AG04450 (cell line): ENCODE measurements at regions of chr11 and their contacts with region 1.

Region 1: DNA sequence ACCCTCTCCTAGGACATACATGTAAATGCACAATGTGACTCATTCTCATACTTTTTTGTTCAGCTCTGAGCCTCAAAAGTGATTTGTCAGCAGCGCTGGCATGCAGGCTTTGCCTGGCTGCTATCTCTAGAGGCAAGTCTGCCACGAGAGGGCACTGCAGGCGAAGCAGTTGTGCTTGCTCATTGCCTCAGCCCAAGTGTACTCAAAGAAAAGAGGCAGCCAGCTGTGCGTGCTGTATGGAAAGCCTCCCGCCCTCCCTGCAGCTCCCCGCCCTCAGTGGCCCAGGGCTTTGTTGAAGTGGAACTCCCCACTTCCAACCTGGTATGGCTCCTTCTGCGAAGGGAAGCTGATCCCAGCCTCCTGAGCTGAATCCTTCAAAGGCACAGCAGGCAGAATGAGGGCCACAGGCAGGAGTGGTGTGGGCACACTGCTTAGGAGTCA is 16.3 kb downstream of the SDHAF2 start:
- DNase-seq: peak; percentile 95
- H3K4me3 ChIP-seq: no peak overlapping the region
- H3K27ac ChIP-seq: peak overlapping the region; percentile 71
- H3K27me3 ChIP-seq: no peaks in the 10 kb centered on the region
- CTCF ChIP-seq: peak; percentile 95

Region 2: GRCh38 chr11:61460474-61460881 is 14.2 kb after region 1 on chr11:
- CTCF ChIA-PET with region 1: interaction called, 77 read pairs
- POLR2A ChIA-PET with region 1: no interaction called
- DNase-seq: no peak
- H3K4me3 ChIP-seq: no peak overlapping the region
- H3K27ac ChIP-seq: no peak overlapping the region
- H3K27me3 ChIP-seq: no peaks in the 10 kb centered on the region
- CTCF ChIP-seq: no peak

Region 3: DNA sequence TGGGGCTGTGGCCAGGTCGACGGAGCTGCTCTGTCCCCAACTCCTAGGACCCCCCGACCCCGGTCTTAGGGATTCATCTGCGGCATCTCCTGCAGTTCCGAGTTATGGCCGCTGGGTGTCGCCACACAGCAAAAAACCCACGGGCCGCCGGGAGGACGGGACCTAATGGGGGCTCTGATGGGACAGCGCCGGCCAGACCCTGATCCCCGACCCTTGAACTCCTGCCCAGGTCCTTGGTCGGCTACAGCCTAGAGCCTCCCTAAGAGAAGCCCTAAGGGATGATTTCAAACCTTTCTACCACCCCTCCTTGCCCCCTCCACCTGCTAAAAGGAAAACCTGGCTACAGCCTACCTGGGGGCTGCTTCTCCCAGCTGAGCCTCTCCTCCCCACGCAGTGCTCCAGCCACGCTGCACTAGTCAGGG is 31.5 kb after region 1 on chr11:
- CTCF ChIA-PET with region 1: interaction called, 13 read pairs
- POLR2A ChIA-PET with region 1: no interaction called
- DNase-seq: no peak
- H3K4me3 ChIP-seq: no peak overlapping the region
- H3K27ac ChIP-seq: no peak overlapping the region
- H3K27me3 ChIP-seq: peaks cover 15% of the 10 kb centered on the region
- CTCF ChIP-seq: peak; percentile 87

Region 4: DNA sequence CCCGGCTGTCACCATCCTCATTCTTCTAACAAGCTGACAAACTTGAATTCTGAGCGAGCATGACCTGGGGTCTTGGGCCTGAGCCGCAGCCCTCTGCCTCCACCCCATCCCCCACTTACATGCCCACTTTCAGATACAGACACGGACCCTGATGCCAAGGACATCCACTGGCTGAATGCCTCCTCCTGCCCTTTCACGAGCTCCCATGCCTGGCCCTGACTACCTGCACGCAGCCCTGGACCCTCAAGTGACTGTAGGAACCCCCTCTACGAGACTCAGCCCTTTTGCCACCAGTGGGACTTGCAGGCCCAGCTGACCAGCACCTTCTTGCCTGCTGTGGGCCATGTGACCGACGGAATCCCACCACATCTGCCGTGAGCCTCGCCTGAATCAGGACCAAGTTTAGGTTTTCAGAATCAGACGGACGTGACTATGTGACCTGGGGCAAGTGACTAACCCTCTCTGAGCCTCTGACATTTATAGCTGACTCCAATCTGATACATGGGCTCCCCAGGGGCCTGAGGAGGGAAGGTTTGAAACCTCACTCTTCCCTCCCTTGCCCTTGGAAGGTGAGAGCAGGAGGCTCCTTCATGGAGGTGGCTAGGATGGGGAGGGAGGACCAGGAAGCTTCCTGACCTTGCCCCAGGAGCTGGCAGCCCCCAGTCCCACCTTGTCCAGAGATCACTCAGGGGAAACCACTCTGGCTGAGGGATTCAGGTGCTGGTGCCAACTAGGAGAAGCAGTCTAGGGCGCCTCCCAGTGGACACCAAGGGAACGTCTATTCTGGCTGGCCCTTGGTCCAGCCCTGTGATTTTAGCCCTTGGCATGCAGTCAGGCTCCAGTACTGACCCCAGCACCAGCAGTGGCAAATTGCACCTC is 181.6 kb after region 1 on chr11:
- CTCF ChIA-PET with region 1: interaction called, 25 read pairs
- POLR2A ChIA-PET with region 1: no interaction called
- DNase-seq: peak; percentile 50
- H3K4me3 ChIP-seq: no peak overlapping the region
- H3K27ac ChIP-seq: no peak overlapping the region
- H3K27me3 ChIP-seq: peaks cover 12% of the 10 kb centered on the region
- CTCF ChIP-seq: peak; percentile 93

Region 5: DNA sequence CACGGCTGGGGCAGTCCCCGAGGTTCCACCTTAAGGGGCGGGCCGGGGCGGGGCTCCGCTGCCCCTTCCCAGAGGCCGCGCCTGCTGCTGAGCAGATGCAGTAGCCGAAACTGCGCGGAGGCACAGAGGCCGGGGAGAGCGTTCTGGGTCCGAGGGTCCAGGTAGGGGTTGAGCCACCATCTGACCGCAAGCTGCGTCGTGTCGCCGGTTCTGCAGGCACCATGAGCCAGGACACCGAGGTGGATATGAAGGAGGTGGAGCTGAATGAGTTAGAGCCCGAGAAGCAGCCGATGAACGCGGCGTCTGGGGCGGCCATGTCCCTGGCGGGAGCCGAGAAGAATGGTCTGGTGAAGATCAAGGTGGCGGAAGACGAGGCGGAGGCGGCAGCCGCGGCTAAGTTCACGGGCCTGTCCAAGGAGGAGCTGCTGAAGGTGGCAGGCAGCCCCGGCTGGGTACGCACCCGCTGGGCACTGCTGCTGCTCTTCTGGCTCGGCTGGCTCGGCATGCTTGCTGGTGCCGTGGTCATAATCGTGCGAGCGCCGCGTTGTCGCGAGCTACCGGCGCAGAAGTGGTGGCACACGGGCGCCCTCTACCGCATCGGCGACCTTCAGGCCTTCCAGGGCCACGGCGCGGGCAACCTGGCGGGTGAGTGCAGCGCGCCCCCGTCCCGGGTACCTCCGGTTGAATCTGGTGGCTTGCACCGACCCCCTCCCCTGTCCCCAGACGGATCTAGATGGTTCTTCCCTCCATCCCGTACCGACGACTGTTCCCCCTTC is 1434.8 kb after region 1 on chr11 and contains the start of gene SLC3A2:
- CTCF ChIA-PET with region 1: no interaction called
- POLR2A ChIA-PET with region 1: no interaction called
- DNase-seq: peak; percentile 56
- H3K4me3 ChIP-seq: peak within 1 kb of the TSS; percentile 100
- H3K27ac ChIP-seq: peak within 1 kb of the TSS; percentile 99
- H3K27me3 ChIP-seq: no peaks in the 10 kb centered on the region
- CTCF ChIP-seq: peak; percentile 50; the same call in 1 of the 2 replicates
- polyA plus RNA-seq, gene SLC3A2: 263 and 284 TPM in 2 replicates